AG04450 (cell line): ENCODE measurements at regions of chr17 and their contacts with region 1.

Region 1: DNA sequence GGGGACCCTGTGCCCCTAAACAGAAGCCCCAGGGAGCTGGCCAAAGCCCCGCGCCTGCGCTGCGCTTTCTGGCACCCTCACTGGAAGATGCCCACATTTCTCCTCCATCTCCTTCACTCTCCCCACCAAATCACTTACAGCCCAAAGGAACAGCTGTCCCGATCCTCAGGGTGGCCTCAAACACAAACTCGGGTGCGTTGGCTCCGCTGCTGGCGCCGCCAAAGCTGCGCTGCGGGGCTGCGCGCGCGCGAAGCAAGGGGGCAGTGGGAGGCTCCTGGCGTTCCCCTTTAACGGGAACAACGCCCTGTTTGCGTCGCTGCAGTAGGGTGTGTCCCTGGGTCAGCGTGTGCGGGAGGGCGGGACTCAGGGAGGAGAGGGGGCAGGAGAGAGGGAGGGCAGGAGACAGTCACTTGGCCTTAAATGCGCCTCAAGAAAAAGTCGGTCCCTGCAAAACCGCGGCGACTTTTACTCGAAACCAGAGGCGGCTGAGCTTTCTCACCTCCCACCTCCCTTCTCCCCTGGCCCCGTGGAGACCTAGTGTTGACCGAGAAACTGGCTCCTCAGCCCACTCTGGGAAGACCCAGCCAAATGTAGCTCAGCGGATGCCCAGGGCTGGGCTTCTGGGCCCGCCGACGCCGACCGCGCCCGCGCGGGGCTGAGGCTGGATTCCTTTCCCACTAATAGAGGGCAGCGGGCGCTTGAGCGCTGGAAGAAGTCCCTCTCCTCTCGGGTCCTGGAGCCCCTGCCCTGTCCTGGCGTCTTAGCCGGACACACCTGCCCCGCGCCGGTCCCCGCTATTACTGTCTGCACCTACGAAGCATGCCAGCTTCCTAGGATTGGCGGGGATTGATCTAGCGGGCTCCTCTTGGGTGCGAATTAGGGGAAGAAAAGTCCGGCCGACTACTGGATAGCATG is 2.6 kb downstream of the PMP22 start:
- DNase-seq: peak; percentile 73
- H3K4me3 ChIP-seq: peak overlapping the region; percentile 88
- H3K27ac ChIP-seq: peak overlapping the region; percentile 93
- H3K27me3 ChIP-seq: peaks cover 7% of the 10 kb centered on the region
- CTCF ChIP-seq: peak; percentile 43

Region 2: DNA sequence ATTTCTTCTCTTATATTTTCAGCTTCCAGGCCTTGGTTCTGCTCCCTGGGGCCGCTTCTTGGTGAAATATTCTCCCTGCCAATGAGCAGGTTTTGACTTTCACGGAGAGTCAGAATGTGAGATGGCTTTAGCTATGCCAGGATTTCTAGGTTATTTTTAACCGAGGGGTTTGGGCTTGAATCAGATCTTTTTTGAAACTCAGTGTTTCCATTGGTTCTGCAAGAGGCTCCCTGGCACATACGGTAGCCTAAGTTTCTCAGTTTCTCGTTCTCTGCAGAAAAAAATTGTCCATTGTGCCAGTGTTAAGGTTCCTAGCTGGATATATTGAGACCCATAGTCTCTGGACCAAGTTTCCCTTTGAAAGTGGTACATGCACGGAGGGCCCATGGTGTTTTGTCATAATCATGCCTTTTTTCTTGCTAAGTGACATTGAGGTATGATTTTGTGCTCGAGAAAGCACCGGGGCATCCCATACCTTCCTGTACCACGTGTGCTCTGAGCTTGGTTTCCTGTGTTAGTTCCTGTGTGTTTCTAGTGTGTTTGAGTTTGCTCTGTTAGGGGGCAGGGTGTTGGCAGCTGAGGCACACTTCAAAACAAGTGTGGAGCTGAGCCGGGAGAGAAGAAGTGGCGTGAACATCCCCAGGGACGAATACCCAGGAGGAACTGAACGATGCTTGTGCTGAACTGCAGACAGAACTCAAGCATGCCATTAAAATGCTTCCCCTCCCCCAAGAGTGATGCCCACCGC is 834.5 kb before region 1 on chr17:
- CTCF ChIA-PET with region 1: no interaction called
- POLR2A ChIA-PET with region 1: no interaction called
- DNase-seq: no peak
- H3K4me3 ChIP-seq: no peak overlapping the region
- H3K27ac ChIP-seq: no peak overlapping the region
- H3K27me3 ChIP-seq: no peaks in the 10 kb centered on the region
- CTCF ChIP-seq: no peak

Region 3: DNA sequence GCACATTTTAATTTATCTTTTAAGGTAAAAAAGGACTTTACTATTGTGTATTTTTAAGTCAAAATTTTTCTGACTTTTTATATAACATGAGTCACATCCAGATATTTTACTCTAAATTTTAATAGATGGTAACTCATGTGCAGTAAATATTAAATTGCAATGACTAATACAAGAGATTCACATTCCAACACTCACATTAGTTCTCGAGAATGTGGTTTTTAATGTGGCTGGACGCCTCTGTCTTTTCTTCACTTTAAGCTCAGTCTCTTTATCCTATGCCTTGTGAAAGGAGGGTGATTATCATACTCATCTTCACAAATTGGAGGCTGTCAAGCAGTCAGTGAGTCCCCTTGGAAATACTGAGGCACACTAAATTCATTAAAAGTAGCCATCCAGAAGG is 646.0 kb before region 1 on chr17:
- CTCF ChIA-PET with region 1: no interaction called
- POLR2A ChIA-PET with region 1: no interaction called
- DNase-seq: no peak
- H3K4me3 ChIP-seq: no peak overlapping the region
- H3K27ac ChIP-seq: no peak overlapping the region
- H3K27me3 ChIP-seq: no peaks in the 10 kb centered on the region
- CTCF ChIP-seq: no peak

Region 4: DNA sequence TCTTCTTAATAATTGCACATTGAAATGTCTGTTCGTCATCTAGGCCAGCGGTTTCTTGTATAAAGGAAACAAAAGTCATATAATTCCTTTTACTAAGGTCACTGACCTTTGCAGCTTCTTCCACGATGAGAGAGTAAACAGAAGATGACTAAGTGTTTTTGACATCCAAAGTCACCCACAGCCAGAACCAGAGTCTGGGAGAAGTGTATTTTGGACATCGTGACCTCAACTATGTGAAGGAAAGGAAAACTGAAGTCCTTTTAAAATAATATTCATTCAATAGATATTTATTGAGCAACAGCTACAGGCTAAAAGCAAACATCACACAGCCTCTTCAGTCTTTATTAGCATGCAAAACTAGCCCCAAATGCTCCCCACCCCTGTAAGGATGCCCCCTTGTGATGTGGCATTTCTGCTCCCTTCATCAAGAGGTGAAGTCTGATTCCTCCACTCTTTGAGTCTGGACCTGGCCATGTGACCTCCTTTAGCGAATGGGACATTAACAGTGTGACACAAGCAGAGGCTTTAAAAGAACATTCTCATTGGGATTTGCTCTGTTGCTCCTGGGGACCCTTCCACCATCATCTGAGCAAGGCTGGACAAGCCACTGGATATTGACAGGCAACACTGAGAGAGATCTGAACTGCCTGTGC is 10.7 kb after region 1 on chr17:
- CTCF ChIA-PET with region 1: no interaction called
- POLR2A ChIA-PET with region 1: interaction called, 13 read pairs
- DNase-seq: peak; percentile 90
- H3K4me3 ChIP-seq: no peak overlapping the region
- H3K27ac ChIP-seq: peak overlapping the region; percentile 80
- H3K27me3 ChIP-seq: no peaks in the 10 kb centered on the region
- CTCF ChIP-seq: no peak

Region 5: DNA sequence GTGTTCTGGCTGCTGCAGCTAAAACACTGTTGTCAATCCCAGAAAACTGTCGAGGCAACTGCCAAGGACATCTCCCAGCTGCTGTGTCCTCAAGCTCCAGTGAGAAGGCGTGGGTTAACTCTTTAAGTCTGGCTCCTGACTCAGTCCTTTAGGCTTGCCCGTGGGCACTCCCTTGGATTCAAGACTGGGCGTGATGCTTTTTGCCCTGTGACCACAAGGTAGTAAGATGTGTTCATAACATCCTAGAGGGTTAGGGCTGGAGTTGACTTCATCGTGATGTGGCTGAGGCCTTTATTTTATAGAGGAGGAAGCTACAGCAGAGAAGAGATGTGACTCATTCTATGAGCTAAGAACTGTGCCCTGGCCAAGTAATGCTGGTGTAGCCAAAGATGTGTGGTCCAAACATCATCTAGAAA is 129.8 kb after region 1 on chr17:
- CTCF ChIA-PET with region 1: no interaction called
- POLR2A ChIA-PET with region 1: interaction called, 16 read pairs
- DNase-seq: peak; percentile 76
- H3K4me3 ChIP-seq: no peak overlapping the region
- H3K27ac ChIP-seq: peak overlapping the region; percentile 68
- H3K27me3 ChIP-seq: no peaks in the 10 kb centered on the region
- CTCF ChIP-seq: no peak

Region 6: GRCh38 chr17:15436473-15437302 is 174.1 kb after region 1 on chr17:
- CTCF ChIA-PET with region 1: interaction called, 9 read pairs
- POLR2A ChIA-PET with region 1: interaction called, 11 read pairs
- DNase-seq: peak; percentile 13
- H3K4me3 ChIP-seq: no peak overlapping the region
- H3K27ac ChIP-seq: peak overlapping the region; percentile 24
- H3K27me3 ChIP-seq: no peaks in the 10 kb centered on the region
- CTCF ChIP-seq: peak; percentile 51